CD4-positive, alpha-beta T cell (primary cell): ENCODE measurements at regions of chr20 and their contacts with region 1.

Region 1: DNA sequence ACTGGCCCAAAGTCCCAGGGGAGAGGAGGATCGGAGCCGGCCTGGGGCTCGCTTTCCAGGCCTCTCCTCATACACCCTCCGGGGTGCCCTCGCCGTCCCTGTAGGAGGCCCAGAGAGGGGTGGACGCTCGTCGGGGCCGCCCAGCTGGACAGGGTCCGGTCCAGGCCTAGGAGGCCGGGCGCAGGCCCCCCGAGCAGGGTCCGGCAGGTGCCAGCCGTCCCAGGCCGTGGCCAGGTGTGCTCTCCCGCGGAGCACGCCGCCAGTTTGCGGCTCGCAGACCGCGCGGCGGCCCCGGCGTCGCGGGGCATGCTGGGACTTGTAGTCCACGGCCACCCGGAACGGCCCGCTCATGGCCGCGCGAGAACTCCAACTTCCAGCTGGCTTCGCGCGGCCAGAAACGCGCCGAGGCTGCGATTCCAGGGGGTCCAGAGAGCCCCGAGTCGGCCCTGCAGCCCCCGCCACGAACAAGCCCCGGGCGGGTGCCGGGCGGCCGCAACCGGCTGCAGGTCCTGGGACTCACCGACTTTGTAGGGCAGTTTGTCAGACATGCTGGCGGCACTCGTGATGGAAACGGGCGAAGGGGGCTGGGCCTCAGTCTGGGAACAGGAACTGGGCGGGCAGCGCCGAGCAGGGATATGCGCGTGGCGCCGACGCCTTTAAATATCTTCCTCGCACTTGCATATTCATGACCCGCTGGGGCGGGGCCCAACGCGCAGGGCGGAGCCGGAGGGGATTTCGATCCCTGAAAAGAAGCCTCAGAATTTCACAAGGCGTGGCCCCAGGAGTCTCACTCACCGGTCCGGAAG is at the start of gene AHCY:
- DNase-seq: peak; percentile 78 to 96 (median 87)
- ATAC-seq: peak; percentile 94
- H3K4me3 ChIP-seq: peak within 1 kb of the TSS; percentile 82
- H3K4me3 Mint-ChIP-seq: peak within 1 kb of the TSS; percentile 98
- H3K27ac ChIP-seq: peak within 1 kb of the TSS; percentile 65 to 84
- H3K27ac Mint-ChIP-seq: peak within 1 kb of the TSS; percentile 91
- H3K4me1 ChIP-seq: peaks cover 17% of the 10 kb centered on the region
- H3K4me1 Mint-ChIP-seq: peaks cover 11% of the 10 kb centered on the region
- H3K27me3 ChIP-seq: no peaks in the 10 kb centered on the region
- H3K27me3 Mint-ChIP-seq: no peaks in the 10 kb centered on the region
- CTCF ChIP-seq: no peak
- total RNA-seq, gene AHCY: 16.7 to 16.9 TPM

Region 2: GRCh38 chr20:33810885-33811777 is 491.8 kb before region 1 on chr20 and contains the start of gene CHMP4B:
- CTCF ChIA-PET with region 1: no interaction called
- POLR2A ChIA-PET with region 1: no interaction called
- intact Hi-C with region 1: loop called in 1 of 2 experiments (anchors 5 kb)
- DNase-seq: peak; percentile 97 to 99 (median 98)
- ATAC-seq: peak; percentile 95
- H3K4me3 ChIP-seq: peak within 1 kb of the TSS; percentile 83
- H3K4me3 Mint-ChIP-seq: peak within 1 kb of the TSS; percentile 100
- H3K27ac ChIP-seq: peak within 1 kb of the TSS; percentile 38 to 66
- H3K27ac Mint-ChIP-seq: peak within 1 kb of the TSS; percentile 93
- H3K4me1 ChIP-seq: peaks cover 45% of the 10 kb centered on the region
- H3K4me1 Mint-ChIP-seq: peaks cover 49% of the 10 kb centered on the region
- H3K27me3 ChIP-seq: no peaks in the 10 kb centered on the region
- H3K27me3 Mint-ChIP-seq: no peaks in the 10 kb centered on the region
- CTCF ChIP-seq: no peak
- total RNA-seq, gene CHMP4B: 44.2 to 49.3 TPM

Region 3: DNA sequence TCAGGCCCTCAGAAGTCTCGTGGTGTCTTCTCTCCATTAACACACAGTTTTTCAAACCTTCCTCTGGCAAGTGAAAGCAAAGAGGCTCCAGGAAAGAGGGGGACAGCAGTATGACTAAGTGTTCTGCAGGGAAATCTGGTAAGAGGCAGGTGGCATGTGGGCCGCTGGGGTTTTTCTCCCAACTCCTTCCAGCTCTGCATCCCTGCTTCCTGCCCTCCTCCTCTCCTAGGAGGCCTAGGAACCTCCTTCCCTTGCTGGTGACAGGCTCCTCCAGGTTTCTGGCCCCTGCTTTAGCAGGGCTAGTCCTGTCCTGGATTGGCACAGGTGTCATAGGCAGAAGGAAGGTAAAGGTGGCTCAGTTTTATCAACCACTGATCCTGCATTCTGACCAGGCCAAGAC is 52.5 kb after region 1 on chr20:
- CTCF ChIA-PET with region 1: no interaction called
- POLR2A ChIA-PET with region 1: no interaction called
- intact Hi-C with region 1: no loop called
- DNase-seq: no peak
- ATAC-seq: no peak
- H3K4me3 ChIP-seq: no peak overlapping the region
- H3K4me3 Mint-ChIP-seq: no peak overlapping the region
- H3K27ac ChIP-seq: no peak overlapping the region
- H3K27ac Mint-ChIP-seq: no peak overlapping the region
- H3K4me1 ChIP-seq: no peaks in the 10 kb centered on the region
- H3K4me1 Mint-ChIP-seq: no peaks in the 10 kb centered on the region
- H3K27me3 ChIP-seq: no peaks in the 10 kb centered on the region
- H3K27me3 Mint-ChIP-seq: no peaks in the 10 kb centered on the region
- CTCF ChIP-seq: no peak

Region 4: GRCh38 chr20:34558320-34559218 is 255.6 kb after region 1 on chr20 and contains the start of gene MAP1LC3A:
- CTCF ChIA-PET with region 1: no interaction called
- POLR2A ChIA-PET with region 1: interaction called, 3 read pairs
- intact Hi-C with region 1: loop called in 1 of 2 experiments (anchors 1 kb)
- DNase-seq: peak; percentile 71 to 98 (median 92)
- ATAC-seq: peak; percentile 81
- H3K4me3 ChIP-seq: peak within 1 kb of the TSS; percentile 82
- H3K4me3 Mint-ChIP-seq: peak within 1 kb of the TSS; percentile 84
- H3K27ac ChIP-seq: peak within 1 kb of the TSS; percentile 87 to 94
- H3K27ac Mint-ChIP-seq: peak within 1 kb of the TSS; percentile 90
- H3K4me1 ChIP-seq: peaks cover 11% of the 10 kb centered on the region
- H3K4me1 Mint-ChIP-seq: peaks cover 14% of the 10 kb centered on the region
- H3K27me3 ChIP-seq: no peaks in the 10 kb centered on the region
- H3K27me3 Mint-ChIP-seq: no peaks in the 10 kb centered on the region
- CTCF ChIP-seq: no peak
- total RNA-seq, gene MAP1LC3A: 17.5 to 17.7 TPM

Region 5: GRCh38 chr20:34825530-34826362 is 522.8 kb after region 1 on chr20 and contains the start of gene NCOA6:
- CTCF ChIA-PET with region 1: no interaction called
- POLR2A ChIA-PET with region 1: no interaction called
- intact Hi-C with region 1: loop called in 1 of 2 experiments (anchors 5 kb)
- DNase-seq: peak; percentile 77 to 95 (median 84)
- ATAC-seq: peak; percentile 75
- H3K4me3 ChIP-seq: peak within 1 kb of the TSS; percentile 70
- H3K4me3 Mint-ChIP-seq: peak within 1 kb of the TSS; percentile 99
- H3K27ac ChIP-seq: peak within 1 kb of the TSS; percentile 35 to 66
- H3K27ac Mint-ChIP-seq: peak within 1 kb of the TSS; percentile 92
- H3K4me1 ChIP-seq: peaks cover 35% of the 10 kb centered on the region
- H3K4me1 Mint-ChIP-seq: peaks cover 47% of the 10 kb centered on the region
- H3K27me3 ChIP-seq: no peaks in the 10 kb centered on the region
- H3K27me3 Mint-ChIP-seq: no peaks in the 10 kb centered on the region
- CTCF ChIP-seq: no peak
- total RNA-seq, gene NCOA6: 14.6 to 16.3 TPM

Region 6: DNA sequence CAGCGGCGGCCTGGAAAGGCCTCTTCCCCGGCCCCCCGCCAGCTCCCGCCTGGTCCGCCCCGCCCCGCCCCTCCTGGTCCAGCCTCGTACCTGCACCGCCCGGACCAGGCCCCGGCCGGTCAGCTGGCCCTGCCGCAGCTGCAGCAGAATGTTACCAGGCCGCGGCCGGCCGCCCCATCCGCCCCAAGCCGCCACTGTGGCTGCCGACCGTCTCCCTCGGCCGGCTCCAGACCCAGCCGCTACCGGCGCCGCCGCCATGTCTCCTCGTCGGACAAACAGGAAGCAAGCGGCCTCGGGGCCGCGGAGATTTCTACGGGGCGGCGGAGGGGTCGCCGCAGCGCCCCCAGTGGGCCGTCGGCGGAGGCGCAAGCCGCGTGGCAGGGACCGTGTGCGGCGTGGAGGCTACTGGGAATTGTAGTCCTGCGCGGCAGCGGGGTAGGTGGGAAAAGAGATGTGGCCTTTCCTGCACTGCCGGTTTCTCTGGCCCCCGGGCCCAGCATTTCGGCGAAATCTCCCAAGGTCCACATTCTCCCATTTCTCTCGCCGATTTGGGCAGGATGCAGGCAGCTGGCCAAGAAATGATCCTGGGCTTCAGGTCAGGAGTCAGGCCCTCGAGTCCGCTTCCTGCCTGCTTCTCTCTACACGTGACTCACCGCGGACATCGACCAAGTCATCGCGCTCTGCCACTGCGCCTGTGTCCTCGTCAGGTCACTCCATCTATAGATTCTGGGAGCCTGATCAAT is 789.8 kb after region 1 on chr20 and contains the start of gene TRPC4AP:
- CTCF ChIA-PET with region 1: no interaction called
- POLR2A ChIA-PET with region 1: no interaction called
- intact Hi-C with region 1: loop called in 1 of 2 experiments (anchors 10 kb)
- DNase-seq: peak; percentile 78 to 96 (median 86)
- ATAC-seq: peak; percentile 98
- H3K4me3 ChIP-seq: peak within 1 kb of the TSS; percentile 99
- H3K4me3 Mint-ChIP-seq: peak within 1 kb of the TSS; percentile 91
- H3K27ac ChIP-seq: peak within 1 kb of the TSS; percentile 72 to 76
- H3K27ac Mint-ChIP-seq: peak within 1 kb of the TSS; percentile 83
- H3K4me1 ChIP-seq: peaks cover 40% of the 10 kb centered on the region
- H3K4me1 Mint-ChIP-seq: peaks cover 53% of the 10 kb centered on the region
- H3K27me3 ChIP-seq: no peaks in the 10 kb centered on the region
- H3K27me3 Mint-ChIP-seq: no peaks in the 10 kb centered on the region
- CTCF ChIP-seq: peak; percentile 85
- total RNA-seq, gene TRPC4AP: 56.3 to 60.6 TPM

Region 7: GRCh38 chr20:35541783-35542588 is 1239.1 kb after region 1 on chr20 and contains the start of gene ERGIC3:
- CTCF ChIA-PET with region 1: no interaction called
- POLR2A ChIA-PET with region 1: no interaction called
- intact Hi-C with region 1: loop called in 1 of 2 experiments (anchors 5 kb)
- DNase-seq: peak; percentile 95 to 99 (median 96)
- ATAC-seq: peak; percentile 99
- H3K4me3 ChIP-seq: peak within 1 kb of the TSS; percentile 75
- H3K4me3 Mint-ChIP-seq: peak within 1 kb of the TSS; percentile 97
- H3K27ac ChIP-seq: peak within 1 kb of the TSS; percentile 65 to 81
- H3K27ac Mint-ChIP-seq: peak within 1 kb of the TSS; percentile 89
- H3K4me1 ChIP-seq: peaks cover 18% of the 10 kb centered on the region
- H3K4me1 Mint-ChIP-seq: peaks cover 32% of the 10 kb centered on the region
- H3K27me3 ChIP-seq: no peaks in the 10 kb centered on the region
- H3K27me3 Mint-ChIP-seq: no peaks in the 10 kb centered on the region
- CTCF ChIP-seq: no peak
- total RNA-seq, gene ERGIC3: 144 to 146 TPM